ENCODE measurements at regions of chr1 and their contacts with region 1.

Region 1: DNA sequence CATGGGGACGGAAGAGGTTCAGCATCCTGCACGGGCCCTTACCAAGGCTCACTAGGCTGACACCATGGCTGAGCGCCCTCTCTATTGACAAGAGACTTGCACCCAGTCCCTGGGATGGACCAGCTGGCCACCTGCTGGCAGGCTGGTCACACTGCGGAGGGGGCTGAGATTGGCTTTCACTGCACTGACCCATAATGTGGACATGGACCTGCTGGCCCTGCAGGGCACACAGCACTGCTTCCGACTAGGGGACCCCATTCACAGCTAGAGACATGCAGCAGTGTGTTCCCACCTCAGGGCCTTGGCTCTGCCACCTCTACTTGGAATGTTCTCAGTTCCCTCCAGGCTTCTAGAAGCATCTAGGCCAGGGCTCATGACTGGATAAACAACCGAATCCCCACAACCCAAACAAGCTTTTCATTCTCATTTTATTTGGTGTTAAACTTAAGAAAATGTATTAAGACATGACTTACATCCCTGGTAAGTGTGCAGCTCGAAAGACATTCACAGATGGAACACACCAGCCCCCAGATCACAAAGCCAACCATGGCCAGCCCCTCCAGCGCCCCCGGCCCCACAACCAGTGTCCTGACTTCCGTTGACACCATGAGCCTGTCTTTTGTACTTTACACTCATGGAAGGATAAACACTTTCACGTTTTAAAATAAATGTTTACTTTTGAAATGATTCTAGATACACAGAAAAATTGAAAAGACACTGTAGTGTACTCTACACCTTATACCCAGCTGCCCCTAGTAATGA is 9.3 kb upstream of the SRARP start:
- DNase-seq: no peak
- H3K4me3 ChIP-seq: no peak overlapping the region
- CTCF ChIP-seq: peak; percentile 94

Region 2: DNA sequence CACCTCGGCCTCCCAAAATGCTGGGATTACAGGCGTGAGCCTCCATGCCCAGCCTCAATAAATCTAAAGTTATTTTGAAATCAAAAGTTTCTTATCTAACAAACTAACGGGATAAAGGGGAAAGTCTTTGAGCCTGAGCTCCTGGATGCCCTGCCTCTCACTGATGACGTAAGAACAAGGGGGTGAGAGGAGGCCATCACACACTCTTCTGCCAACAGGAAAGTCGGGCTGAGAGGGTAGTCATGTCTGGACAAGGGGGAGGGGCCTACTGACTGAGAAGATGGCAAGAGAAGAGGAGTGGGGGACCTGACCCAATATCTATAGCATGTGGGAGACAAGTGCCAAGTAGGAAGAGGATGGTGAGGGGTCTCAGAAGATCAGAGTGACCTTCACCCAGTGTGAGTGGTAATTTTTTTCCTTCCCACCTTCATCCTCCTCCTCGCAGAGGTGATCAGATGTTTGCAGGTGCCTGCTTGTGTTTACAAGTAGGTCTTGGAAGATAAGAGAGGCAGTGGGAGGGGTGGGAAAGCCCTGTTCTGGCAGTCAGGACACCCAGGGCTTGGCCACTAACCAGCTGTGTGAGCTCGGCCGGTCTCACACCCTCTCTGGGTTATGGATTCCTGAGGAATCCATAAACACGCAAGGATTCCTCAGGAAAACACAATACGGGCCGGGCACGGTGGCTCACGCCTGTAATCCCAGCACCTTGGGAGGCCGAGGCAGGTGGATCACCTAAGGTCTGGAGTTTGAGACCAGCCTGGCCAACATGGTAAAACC is 197.0 kb before region 1 on chr1:
- CTCF ChIA-PET with region 1: interaction called, 79 read pairs
- POLR2A ChIA-PET with region 1: no interaction called
- DNase-seq: no peak
- H3K4me3 ChIP-seq: no peak overlapping the region
- CTCF ChIP-seq: no peak

Region 3: DNA sequence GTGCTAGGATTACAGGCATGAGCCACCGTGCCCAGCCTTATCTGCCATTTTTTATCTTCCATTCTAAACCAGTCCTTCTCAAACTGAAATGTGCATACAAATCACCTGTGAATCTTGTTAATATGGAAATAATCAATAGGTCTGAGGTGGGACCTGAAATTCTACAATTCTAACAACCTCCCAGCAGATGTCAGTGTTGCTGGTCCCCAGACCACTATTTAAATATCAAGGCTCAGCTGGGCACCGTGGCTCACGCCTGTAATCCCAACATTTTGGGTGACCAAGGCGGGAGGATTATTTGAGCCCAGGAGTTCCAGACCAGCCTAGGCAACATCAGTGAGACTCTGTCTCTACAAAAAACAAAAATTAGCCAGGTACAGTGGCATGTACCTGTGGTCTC is 191.4 kb before region 1 on chr1:
- CTCF ChIA-PET with region 1: interaction called, 28 read pairs
- POLR2A ChIA-PET with region 1: no interaction called
- DNase-seq: no peak
- H3K4me3 ChIP-seq: no peak overlapping the region
- CTCF ChIP-seq: peak; percentile 28

Region 4: GRCh38 chr1:15810073-15810472 is 184.7 kb before region 1 on chr1:
- CTCF ChIA-PET with region 1: interaction called, 66 read pairs
- POLR2A ChIA-PET with region 1: no interaction called
- DNase-seq: no peak
- H3K4me3 ChIP-seq: no peak overlapping the region
- CTCF ChIP-seq: no peak

Region 5: DNA sequence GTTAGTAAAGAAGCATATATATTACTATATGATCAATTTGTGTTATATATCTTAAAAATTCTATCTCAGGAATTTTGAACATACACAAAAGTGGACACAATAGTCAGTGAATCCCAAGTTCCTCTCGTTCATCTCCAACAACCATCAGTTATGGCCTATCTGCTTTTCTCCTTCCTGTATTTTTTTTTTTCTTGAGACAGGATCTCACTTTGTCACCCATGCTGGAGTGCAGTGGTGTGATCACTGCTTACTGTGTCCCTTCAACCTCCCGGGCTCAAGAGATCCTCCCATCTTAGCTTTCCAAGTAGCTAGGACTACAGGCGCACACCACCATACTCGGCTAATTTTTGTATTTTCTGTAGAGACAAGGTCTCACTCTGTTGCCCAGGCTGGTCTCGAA is 137.9 kb before region 1 on chr1:
- CTCF ChIA-PET with region 1: no interaction called
- POLR2A ChIA-PET with region 1: no interaction called
- DNase-seq: no peak
- H3K4me3 ChIP-seq: no peak overlapping the region
- CTCF ChIP-seq: no peak

Region 6: GRCh38 chr1:15941899-15942660 is 52.7 kb before region 1 on chr1:
- CTCF ChIA-PET with region 1: interaction called, 10 read pairs
- POLR2A ChIA-PET with region 1: no interaction called
- DNase-seq: no peak
- H3K4me3 ChIP-seq: no peak overlapping the region
- CTCF ChIP-seq: no peak

Region 7: GRCh38 chr1:15957228-15958095 is 37.3 kb before region 1 on chr1:
- CTCF ChIA-PET with region 1: interaction called, 25 read pairs
- POLR2A ChIA-PET with region 1: no interaction called
- DNase-seq: no peak
- H3K4me3 ChIP-seq: no peak overlapping the region
- CTCF ChIP-seq: peak; percentile 51

Region 8: DNA sequence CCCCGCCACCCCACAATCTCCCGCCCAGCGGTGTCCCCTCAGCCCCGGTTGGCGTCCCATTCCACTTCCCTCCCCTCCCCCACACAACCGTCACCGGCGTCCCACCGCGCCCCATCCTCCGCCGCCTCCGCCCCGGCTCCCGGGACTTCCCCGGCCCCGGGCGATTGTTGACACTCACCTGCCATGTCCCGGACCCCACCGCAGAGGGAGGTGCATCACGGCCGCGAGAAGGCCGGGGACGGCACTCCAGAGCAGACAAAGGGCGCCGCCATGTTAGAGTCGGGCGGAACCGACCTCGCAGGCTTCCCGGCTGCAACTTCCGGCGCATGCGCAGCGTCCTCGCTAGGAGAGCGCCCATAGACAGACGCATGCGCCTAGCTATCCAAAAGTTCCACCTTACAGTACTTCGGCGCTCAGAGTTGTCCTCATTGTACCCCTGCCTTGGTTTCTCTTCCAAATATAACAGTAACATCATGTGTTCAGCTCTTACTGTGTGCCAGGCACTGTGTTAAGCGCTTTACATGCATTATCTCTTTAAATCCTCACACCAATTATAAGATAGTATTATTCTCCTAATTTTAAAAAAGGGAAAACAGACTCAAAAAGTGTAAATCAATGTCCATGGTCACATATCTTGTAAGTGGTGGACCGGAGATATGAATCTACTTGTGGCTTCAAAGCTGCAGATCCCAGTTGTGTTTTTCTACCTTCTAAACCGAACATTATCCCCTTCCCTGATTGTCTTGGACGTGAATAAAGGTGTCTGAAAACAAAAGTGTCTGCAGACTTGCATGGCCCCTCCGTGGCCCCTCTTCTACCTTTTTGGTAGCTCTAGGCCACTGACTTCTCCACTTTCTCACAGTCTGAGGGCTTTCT is 18.7 kb before region 1 on chr1 and contains the start of gene ZBTB17:
- CTCF ChIA-PET with region 1: interaction called, 27 read pairs
- POLR2A ChIA-PET with region 1: no interaction called
- DNase-seq: no peak
- H3K4me3 ChIP-seq: peak within 1 kb of the TSS; percentile 76
- CTCF ChIP-seq: no peak

Region 9: GRCh38 chr1:16187748-16188401 is 193.1 kb after region 1 on chr1:
- CTCF ChIA-PET with region 1: no interaction called
- POLR2A ChIA-PET with region 1: no interaction called
- DNase-seq: no peak
- H3K4me3 ChIP-seq: no peak overlapping the region
- CTCF ChIP-seq: peak; percentile 97

Measured in AG04449 (cell line).